PC-3 (cell line): ENCODE measurements at regions of chr2 and their contacts with region 1.

Region 1: DNA sequence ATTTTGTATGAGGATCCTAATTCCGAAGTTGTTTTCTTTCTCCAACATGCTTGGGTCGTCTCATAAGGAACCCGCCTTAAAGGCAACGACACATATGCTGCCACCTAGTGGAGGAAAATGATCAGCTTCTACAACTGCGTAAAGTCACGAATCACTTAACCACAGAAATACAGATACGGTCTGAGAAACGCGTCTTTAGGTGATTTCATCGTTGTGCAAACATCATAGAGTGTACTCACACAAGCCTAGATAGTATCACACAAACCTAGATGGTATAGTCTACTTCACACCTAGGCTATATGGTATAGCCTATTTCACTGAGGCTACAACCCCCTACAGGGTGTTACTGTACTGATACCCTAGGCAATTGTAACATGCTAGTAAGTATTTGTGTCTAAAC is 13.1 kb downstream of the GNLY start:
- DNase-seq: peak; percentile 99
- ATAC-seq: peak; percentile 93
- H3K4me3 ChIP-seq: no peak overlapping the region
- H3K27ac ChIP-seq: no peak overlapping the region
- H3K4me1 ChIP-seq: peaks cover 28% of the 10 kb centered on the region
- H3K27me3 ChIP-seq: no peaks in the 10 kb centered on the region
- CTCF ChIP-seq: peak; percentile 92

Region 2: GRCh38 chr2:85642725-85643124 is 64.6 kb before region 1 on chr2:
- CTCF ChIA-PET with region 1: interaction called, 3 read pairs
- POLR2A ChIA-PET with region 1: no interaction called
- intact Hi-C with region 1: loop called (anchors 1 kb)
- DNase-seq: no peak
- ATAC-seq: no peak
- H3K4me3 ChIP-seq: no peak overlapping the region
- H3K27ac ChIP-seq: no peak overlapping the region
- H3K4me1 ChIP-seq: 0 out of 2 replicates have a peak, but pooled peaks cover under 1% of the 10 kb centered on the region
- H3K27me3 ChIP-seq: no peaks in the 10 kb centered on the region
- CTCF ChIP-seq: no peak

Region 3: GRCh38 chr2:85662899-85663593 is 44.3 kb before region 1 on chr2:
- CTCF ChIA-PET with region 1: no interaction called
- POLR2A ChIA-PET with region 1: interaction called, 16 read pairs
- intact Hi-C with region 1: no loop called
- DNase-seq: peak; percentile 73
- ATAC-seq: peak; percentile 90
- H3K4me3 ChIP-seq: no peak overlapping the region
- H3K27ac ChIP-seq: no peak overlapping the region
- H3K4me1 ChIP-seq: 0 out of 2 replicates have a peak, but pooled peaks cover 4% of the 10 kb centered on the region
- H3K27me3 ChIP-seq: no peaks in the 10 kb centered on the region
- CTCF ChIP-seq: no peak

Region 4: GRCh38 chr2:85678794-85679672 is 28.3 kb before region 1 on chr2:
- CTCF ChIA-PET with region 1: interaction called, 6 read pairs
- POLR2A ChIA-PET with region 1: no interaction called
- intact Hi-C with region 1: loop called (anchors 1 kb)
- DNase-seq: peak; percentile 93
- ATAC-seq: peak; percentile 95
- H3K4me3 ChIP-seq: peak overlapping the region; percentile 42; the same call in 1 of the 2 replicates
- H3K27ac ChIP-seq: no peak overlapping the region
- H3K4me1 ChIP-seq: peaks cover 19% of the 10 kb centered on the region
- H3K27me3 ChIP-seq: no peaks in the 10 kb centered on the region
- CTCF ChIP-seq: peak; percentile 93